ENCODE measurements at regions of chr13 and their contacts with region 1.

Region 1: GRCh38 chr13:46721054-46721453 is 75.9 kb downstream of the ESD start:
- DNase-seq: peak; percentile 33
- ATAC-seq: no peak
- H3K4me3 ChIP-seq: no peak overlapping the region
- H3K27ac ChIP-seq: no peak overlapping the region
- H3K4me1 ChIP-seq: peaks cover 15% of the 10 kb centered on the region
- H3K27me3 ChIP-seq: no peaks in the 10 kb centered on the region
- CTCF ChIP-seq: peak; percentile 68
- EP300 ChIP-seq: no peak
- POLR2A ChIP-seq: no peak
- RAD21 ChIP-seq: peak; percentile 38; the same call in 1 of the 2 replicates

Region 2: GRCh38 chr13:45954846-45955800 is 765.9 kb before region 1 on chr13:
- CTCF ChIA-PET with region 1: no interaction called
- POLR2A ChIA-PET with region 1: no interaction called
- in situ Hi-C with region 1: no loop called
- intact Hi-C with region 1: no loop called
- DNase-seq: no peak
- ATAC-seq: no peak
- H3K4me3 ChIP-seq: no peak overlapping the region
- H3K27ac ChIP-seq: no peak overlapping the region
- H3K4me1 ChIP-seq: no peaks in the 10 kb centered on the region
- H3K27me3 ChIP-seq: no peaks in the 10 kb centered on the region
- CTCF ChIP-seq: no peak
- EP300 ChIP-seq: no peak
- POLR2A ChIP-seq: no peak
- RAD21 ChIP-seq: no peak

Region 3: DNA sequence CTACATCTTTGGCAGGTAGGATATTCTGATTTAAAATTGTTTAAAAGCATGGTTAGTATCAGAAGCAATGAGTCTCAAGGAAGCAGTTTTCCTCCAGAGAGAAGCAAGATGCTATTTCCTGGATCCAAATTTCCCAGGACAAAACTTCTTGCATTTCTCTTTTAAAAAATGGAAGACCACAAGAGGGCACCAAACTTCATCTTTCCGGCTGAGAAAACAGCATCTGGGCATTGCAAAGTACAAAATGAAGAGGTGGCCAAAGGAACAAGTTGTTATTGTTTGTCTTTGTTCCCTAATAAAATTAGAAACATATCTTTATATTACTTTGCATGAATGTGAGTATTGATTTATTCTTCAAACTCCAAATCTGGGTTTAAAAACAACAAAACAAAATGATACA is 228.1 kb before region 1 on chr13:
- CTCF ChIA-PET with region 1: interaction called, 24 read pairs
- POLR2A ChIA-PET with region 1: no interaction called
- in situ Hi-C with region 1: loop called (anchors 5 kb)
- intact Hi-C with region 1: loop called (anchors 1 kb)
- DNase-seq: peak; percentile 22
- ATAC-seq: no peak
- H3K4me3 ChIP-seq: no peak overlapping the region
- H3K27ac ChIP-seq: no peak overlapping the region
- H3K4me1 ChIP-seq: no peaks in the 10 kb centered on the region
- H3K27me3 ChIP-seq: peaks cover 0 to 3% of the 10 kb centered on the region in 2 experiments; a peak in 4 of 5 replicates
- CTCF ChIP-seq: peak; percentile 61
- EP300 ChIP-seq: no peak
- POLR2A ChIP-seq: no peak
- RAD21 ChIP-seq: peak; percentile 33; the same call in 1 of the 2 replicates

Region 4: GRCh38 chr13:46679369-46680120 is 41.5 kb before region 1 on chr13:
- CTCF ChIA-PET with region 1: no interaction called
- POLR2A ChIA-PET with region 1: no interaction called
- in situ Hi-C with region 1: no loop called
- intact Hi-C with region 1: no loop called
- DNase-seq: peak; percentile 9
- ATAC-seq: peak; percentile 55
- H3K4me3 ChIP-seq: no peak overlapping the region
- H3K27ac ChIP-seq: no peak overlapping the region
- H3K4me1 ChIP-seq: peaks cover 83% of the 10 kb centered on the region
- H3K27me3 ChIP-seq: no peaks in the 10 kb centered on the region
- CTCF ChIP-seq: no peak
- EP300 ChIP-seq: no peak
- POLR2A ChIP-seq: no peak
- RAD21 ChIP-seq: no peak

Region 5: DNA sequence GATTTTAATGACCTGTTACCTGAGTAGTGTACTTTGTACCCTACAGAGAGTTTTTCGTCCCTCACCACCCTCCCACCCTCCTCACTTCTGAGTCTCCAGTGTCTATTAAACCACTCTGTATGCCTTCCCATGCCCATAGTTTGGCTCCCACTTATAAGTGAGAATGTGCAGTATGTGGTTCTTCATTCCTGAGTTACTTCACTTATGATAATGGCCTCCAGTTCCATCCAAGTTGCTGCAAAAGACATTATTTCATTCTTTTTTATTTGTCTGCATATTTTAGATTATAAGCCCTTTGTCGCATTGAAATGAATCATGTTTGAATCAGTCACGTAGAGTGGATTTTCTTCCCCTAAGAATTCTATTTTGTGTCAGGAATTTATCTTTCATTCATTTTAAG is 188.0 kb after region 1 on chr13:
- CTCF ChIA-PET with region 1: no interaction called
- POLR2A ChIA-PET with region 1: no interaction called
- in situ Hi-C with region 1: no loop called
- intact Hi-C with region 1: no loop called
- DNase-seq: no peak
- ATAC-seq: no peak
- H3K4me3 ChIP-seq: no peak overlapping the region
- H3K27ac ChIP-seq: no peak overlapping the region
- H3K4me1 ChIP-seq: no peaks in the 10 kb centered on the region
- H3K27me3 ChIP-seq: no peaks in the 10 kb centered on the region; a peak in 1 of 5 replicates
- CTCF ChIP-seq: no peak
- EP300 ChIP-seq: no peak
- POLR2A ChIP-seq: no peak
- RAD21 ChIP-seq: no peak

Measured in HepG2 (cell line).